Left colon (tissue), 2 donors: ENCODE measurements at regions of chr3 and their contacts with region 1.

Region 1: GRCh38 chr3:30112902-30113484 is 493.4 kb upstream of the TGFBR2 start:
- DNase-seq: no peak
- ATAC-seq: peak; percentile 52

Region 2: DNA sequence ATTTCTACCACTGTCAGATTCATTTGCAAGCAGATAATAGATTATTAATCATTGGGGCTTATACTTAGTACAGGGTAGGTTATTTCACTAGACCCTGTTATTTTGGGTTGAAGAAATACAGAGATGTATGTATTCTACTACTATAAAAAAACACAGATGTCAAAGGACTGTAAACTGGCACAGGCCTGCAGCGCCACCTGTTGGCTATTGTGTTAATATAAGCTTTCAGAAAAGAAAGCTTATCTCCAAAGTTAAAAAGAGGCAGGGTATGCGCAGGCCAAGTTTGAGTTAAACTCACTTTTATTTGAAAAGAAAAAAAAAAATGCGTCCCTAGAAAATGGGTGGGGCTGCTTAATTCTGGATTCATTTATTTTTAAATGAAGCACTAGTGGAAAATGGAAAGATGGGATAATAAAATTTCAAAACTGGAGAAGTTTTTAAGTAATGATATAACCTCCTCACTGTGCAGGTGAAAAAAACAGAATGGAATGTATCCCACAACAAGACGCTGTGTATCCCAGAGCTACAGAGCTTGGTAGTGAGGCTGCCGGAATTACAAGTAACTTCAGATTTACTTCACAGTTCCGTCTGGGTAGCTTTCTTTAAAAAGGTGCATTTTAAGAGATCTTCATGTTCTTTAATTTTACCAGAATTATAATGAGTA is 86.2 kb after region 1 on chr3:
- intact Hi-C with region 1: loop called in 1 of 2 experiments (anchors 10 kb)
- DNase-seq: peak; percentile 39 to 83
- ATAC-seq: peak; percentile 59

Region 3: GRCh38 chr3:30696403-30696819 is 583.4 kb after region 1 on chr3:
- intact Hi-C with region 1: loop called in 1 of 2 experiments (anchors 5 kb)
- DNase-seq: no peak
- ATAC-seq: no peak